ENCODE measurements at regions of chr13 and their contacts with region 1.

Region 1: DNA sequence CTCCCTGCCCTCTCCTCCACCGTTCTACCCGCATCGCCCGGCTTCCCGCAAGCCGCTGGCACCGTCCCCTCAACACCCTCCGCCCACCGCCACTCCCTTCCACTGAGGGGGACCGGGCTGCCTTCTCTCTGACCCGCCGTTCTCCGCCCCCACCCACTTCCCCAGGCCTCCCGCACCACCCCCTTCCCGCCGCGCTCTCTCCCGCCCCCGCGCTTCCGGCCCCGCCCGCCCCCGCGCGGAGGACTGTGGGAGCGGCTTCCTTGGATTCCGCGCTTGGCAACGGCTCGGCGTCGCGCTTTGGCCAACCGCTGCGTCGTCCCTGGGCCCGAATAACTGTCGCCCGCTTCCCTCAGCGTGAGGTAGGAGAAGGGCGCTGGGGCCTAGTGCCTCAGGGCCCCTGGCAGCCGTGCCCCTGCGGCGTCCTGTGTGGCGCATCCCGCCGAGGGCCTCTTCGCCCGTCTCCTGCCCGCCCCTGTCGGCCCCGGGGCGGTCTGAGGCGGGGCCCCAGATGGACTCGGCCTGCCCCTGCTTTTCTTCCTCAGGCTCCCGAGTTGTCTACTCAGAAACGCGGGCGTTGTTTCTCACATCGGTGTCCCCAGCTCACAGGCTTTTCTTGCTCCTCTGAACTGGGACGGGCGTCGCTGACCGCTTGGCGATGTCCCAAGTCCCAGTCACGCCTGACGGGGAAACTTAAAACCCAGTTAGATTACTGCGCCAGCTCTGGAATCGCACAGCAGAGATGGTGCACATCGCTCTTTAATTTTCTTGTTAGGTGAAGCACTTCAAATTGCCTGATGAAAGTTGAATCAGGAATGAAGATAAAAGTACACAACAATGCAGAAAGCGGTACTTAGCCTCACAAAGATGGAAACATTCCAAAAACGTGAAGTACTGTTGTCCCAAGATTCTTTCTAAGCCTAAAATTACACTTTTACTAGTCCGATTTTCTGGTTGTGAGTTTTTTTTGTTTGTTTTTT is at the start of gene IFT88:
- DNase-seq: peak; percentile 92
- H3K4me3 ChIP-seq: peak within 1 kb of the TSS; percentile 67 to 81 (median 74)
- H3K27ac ChIP-seq: peak within 1 kb of the TSS; percentile 94 to 96 (median 95)
- H3K4me1 ChIP-seq: peaks cover 0 to 19% (median 15%) of the 10 kb centered on the region in 4 donors
- H3K27me3 ChIP-seq: no peaks in the 10 kb centered on the region
- CTCF ChIP-seq: no peak
- EP300 ChIP-seq: no peak
- POLR2A ChIP-seq: peak in 1 of 2 donors; percentile 9
- total RNA-seq, gene IFT88: 13.8 to 21.8 (median 16.9) TPM

Region 2: DNA sequence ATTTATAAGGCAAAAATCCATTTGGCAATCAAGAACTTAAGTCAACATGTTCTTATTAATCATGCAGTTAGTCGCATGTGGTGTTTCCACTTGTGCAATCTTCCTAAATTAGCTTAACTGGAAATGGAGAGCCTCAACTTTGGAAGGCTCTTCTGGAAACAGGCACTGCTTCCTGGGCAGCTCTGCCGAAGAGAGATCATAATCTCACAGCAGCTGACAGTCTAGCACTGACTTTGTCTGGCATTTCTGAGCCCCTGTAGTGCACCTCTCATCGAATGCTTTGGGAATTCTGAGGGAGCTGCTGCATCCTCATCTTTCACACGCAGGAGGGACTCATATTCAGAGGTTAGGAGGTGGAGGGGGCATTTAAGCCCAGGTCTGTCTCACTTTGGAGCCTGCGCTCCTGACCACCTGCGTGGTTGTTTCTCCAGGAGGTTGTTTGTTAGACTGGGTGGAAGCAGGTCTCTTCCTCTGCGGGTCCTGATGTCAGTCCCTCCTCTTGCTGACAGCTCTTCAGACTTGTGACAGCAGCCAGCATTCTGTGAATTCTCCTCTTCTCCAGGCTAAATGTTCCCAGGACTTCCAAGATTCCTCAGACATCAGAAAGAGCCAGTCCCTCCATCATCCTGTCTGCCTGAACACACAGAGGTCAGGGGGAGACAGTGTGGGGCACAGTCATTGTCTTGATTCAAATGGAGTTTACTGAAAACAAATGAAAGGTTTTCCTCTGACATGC is 234.7 kb before region 1 on chr13:
- intact Hi-C with region 1: no loop called
- DNase-seq: no peak
- H3K4me3 ChIP-seq: no peak overlapping the region
- H3K27ac ChIP-seq: no peak overlapping the region
- H3K4me1 ChIP-seq: no peaks in the 10 kb centered on the region
- H3K27me3 ChIP-seq: no peaks in the 10 kb centered on the region
- CTCF ChIP-seq: no peak
- EP300 ChIP-seq: no peak
- POLR2A ChIP-seq: no peak

Region 3: GRCh38 chr13:20525690-20526544 is 41.3 kb before region 1 on chr13 and contains the start of gene CRYL1:
- intact Hi-C with region 1: loop called (anchors 1 kb)
- DNase-seq: peak; percentile 88
- H3K4me3 ChIP-seq: peak within 1 kb of the TSS; percentile 66 to 98 (median 92)
- H3K27ac ChIP-seq: peak within 1 kb of the TSS; percentile 82 to 84 (median 84)
- H3K4me1 ChIP-seq: peaks cover 0 to 22% (median 10%) of the 10 kb centered on the region in 4 donors
- H3K27me3 ChIP-seq: no peaks in the 10 kb centered on the region
- CTCF ChIP-seq: no peak
- EP300 ChIP-seq: peak in 1 of 4 donors; percentile 33
- POLR2A ChIP-seq: peak in 1 of 2 donors; percentile 7
- total RNA-seq, gene CRYL1: 33.0 to 53.5 (median 37.7) TPM

Region 4: DNA sequence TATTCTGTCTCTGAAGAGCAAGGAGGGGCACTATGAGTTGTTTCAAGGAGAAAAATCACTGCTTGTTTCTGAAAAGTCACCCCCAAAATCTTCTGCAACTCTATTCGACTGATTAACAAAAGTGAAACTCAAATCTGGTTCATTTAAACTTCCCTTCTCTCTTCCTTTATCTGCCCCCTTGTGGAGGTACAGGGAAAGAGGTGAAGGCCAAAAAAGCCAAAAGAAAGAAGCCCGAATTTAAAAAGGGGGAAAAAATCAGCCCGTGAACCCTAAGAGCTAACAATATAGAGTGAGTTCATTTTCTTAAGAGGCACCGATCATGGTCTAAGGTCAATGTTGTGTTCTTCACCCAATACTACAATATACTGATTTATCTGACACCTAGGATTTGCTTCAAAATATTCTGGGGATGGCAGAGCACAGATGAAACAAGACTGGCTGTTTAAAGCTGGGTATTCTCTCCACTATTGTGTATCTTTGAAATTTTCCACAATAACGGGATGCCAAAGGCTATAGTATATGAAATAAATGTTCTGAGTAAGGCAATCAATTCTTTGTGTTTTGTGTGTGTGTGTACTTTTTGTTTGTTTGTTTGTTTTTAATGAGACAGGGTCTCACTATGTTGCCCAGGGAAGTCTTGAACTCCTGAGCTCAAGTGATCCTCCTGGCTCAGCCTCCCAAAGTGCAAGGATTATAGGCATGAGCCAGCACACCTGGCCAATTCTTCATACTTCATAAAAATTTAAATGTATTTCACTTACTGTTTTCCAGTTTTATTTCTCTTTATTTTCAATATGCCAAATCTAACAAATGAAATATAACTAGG is 261.6 kb after region 1 on chr13:
- intact Hi-C with region 1: loop called (anchors 10 kb)
- DNase-seq: no peak
- H3K4me3 ChIP-seq: peak overlapping the region in 3 of 4 donors; percentile 16 to 30 (median 23)
- H3K27ac ChIP-seq: peak overlapping the region; percentile 44 to 55 (median 47)
- H3K4me1 ChIP-seq: peaks cover 0 to 65% (median 35%) of the 10 kb centered on the region in 4 donors
- H3K27me3 ChIP-seq: no peaks in the 10 kb centered on the region
- CTCF ChIP-seq: peak; percentile 49 to 82 (median 79)
- EP300 ChIP-seq: no peak
- POLR2A ChIP-seq: no peak

Measured in sigmoid colon (tissue), 7 donors.